ENCODE measurements at regions of chr20 and their contacts with region 1.

Region 1: DNA sequence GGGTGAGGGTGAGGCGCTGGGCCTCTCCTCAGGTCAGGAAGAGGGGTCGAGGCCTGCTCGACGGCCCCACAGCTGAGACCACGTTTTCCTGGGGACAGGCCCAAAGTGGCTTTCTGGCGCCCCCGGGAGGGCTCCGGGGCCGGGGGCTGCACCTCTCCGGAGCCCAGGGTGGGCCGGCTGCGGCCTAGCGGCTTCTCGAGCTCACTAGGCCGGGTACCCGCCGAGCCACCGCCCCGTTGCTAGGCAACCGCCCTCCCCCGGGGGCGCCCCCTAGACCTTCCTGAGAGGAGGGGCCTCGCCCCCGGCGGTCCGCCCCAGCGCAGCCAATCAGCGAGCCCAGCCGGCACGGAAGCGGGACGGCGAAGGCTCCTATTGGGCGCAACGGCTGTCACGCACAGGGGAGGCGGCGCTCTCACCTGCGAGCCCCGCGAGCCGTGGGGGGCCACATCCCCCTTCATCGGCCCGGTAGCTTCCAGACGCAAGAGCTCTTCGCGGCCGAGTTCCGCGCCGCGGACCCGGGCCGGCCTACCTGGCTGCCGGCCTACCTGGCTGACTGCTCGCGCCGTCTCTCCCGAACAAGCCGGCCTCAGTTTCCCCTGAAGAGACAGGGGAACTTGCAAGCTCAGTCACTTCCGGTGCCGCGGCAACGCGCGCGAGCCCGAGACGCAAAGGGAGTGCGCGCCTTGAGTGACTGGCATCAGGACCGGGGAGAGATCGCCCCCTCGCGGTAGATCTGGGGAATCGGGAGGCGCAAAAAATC is 831 bp upstream of the BCL2L1 start:
- DNase-seq: peak; percentile 97
- H3K4me3 ChIP-seq: peak overlapping the region; percentile 73 to 82 (median 77)
- H3K27ac ChIP-seq: peak overlapping the region; percentile 98 to 99 (median 98)
- H3K4me1 ChIP-seq: peaks cover 14 to 42% (median 32%) of the 10 kb centered on the region in 4 donors
- H3K27me3 ChIP-seq: no peaks in the 10 kb centered on the region
- CTCF ChIP-seq: peak; percentile 90 to 99 (median 97)
- EP300 ChIP-seq: no peak
- POLR2A ChIP-seq: peak; percentile 22

Region 2: DNA sequence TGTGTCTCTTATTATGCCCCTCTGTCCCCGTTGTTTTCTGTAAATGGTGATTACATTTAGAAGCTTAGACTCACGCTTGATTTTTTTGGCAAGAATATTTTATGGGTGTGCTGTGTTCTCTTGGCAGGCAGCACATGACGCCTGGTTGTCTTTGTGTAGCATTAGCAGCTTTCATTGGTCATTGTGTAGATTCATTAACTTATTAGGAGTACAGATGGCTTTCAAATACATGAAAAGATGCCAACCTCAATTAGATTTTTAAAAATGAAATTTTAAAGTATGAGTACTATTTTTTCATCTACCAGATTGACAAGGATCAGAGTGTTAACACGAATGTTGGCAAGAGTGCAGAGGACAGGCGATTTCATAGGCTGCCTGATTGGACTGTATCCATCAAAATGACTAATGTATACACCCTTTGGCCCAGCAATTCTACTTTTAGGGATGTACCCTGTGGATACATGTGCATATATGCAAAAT is 70.5 kb before region 1 on chr20:
- in situ Hi-C with region 1: loop called in 1 of 4 experiments (anchors 10 kb)
- intact Hi-C with region 1: no loop called
- DNase-seq: no peak
- H3K4me3 ChIP-seq: no peak overlapping the region
- H3K27ac ChIP-seq: no peak overlapping the region
- H3K4me1 ChIP-seq: peaks cover 0 to 10% (median 6%) of the 10 kb centered on the region in 4 donors
- H3K27me3 ChIP-seq: no peaks in the 10 kb centered on the region
- CTCF ChIP-seq: no peak
- EP300 ChIP-seq: no peak
- POLR2A ChIP-seq: no peak

Region 3: DNA sequence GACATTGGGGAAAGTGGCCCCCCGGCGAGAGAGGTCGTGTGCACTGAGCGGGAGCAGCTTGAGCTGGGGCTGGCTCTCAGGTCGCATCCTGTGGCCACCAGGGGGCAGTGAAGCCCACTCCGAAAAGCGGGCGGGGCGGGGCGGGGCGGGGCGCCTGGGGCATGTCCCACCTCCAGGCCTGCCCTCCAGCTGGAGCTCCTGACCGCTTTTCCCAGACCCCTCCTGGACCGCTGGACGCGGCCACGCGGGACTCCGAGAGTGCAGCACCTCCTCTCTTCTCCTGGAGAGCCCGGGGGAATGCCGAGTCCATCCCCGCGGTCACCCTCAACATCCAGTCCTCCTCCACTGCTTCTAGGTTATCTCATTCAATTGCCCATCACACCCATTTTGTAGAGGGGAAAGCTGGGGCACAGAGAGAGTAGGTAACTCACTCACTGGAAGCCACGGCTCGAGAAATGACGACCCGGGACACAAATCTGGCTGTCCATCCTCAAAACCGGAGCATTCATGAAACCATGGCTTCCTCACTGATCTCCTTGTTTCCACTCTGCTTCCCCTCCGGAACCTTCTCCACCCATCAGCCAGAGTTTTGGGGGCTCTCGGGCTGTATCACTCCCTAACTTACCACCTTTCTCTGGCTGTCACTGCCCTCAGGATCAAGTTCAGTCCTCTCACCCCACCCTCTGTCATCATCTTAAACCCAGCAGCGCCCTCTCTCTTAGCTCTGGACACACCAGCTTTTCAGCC is 61.7 kb before region 1 on chr20:
- in situ Hi-C with region 1: loop called (anchors 5 to 10 kb)
- intact Hi-C with region 1: loop called (anchors 1 kb)
- DNase-seq: peak; percentile 85
- H3K4me3 ChIP-seq: peak overlapping the region in 3 of 4 donors; percentile 12 to 53 (median 33)
- H3K27ac ChIP-seq: peak overlapping the region; percentile 66 to 84 (median 79)
- H3K4me1 ChIP-seq: peaks cover 30 to 57% (median 51%) of the 10 kb centered on the region in 4 donors
- H3K27me3 ChIP-seq: no peaks in the 10 kb centered on the region
- CTCF ChIP-seq: peak; percentile 61 to 87 (median 85)
- EP300 ChIP-seq: no peak
- POLR2A ChIP-seq: peak; percentile 38

Measured in transverse colon (tissue), 4 donors.